ENCODE measurements at regions of chr19 and their contacts with region 1.

Region 1: DNA sequence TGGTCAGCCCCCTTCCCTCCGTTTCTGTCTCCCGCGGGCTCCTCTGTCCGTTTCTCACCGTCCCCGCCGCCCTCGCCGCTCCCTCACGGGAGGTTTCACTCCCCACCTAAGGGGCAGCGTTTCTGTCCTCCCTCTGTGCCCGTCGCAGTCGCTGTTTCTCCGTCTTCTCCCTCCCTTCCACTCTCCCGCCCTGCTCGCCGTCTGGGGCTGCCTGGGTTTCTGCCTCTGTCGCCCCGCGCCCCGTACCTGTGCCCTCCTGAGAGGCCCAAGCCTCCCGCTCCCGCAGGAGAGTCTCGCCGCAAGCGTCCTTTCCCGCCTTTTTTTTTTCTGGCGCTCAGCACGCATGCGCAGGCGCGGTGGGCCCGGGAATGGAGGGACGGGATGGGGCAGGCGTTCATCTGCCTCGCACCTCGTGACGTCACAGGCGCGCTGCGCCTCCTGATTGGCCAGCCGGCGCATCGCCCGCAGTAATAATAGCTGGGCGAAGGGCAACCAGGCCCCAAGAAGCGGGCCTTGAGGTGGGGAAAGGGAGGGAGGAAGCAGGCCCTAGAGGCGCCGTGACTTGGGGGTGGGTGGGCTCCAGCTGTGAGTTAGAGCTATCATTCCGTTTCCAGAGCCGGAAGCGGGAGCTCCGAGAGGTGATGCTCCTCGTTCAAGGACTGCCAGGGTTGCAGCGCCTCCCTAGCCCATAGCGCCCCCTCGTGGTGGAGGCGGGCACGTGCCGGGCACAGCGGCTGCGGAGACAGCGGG is 15.4 kb downstream of the SSC5D start:
- DNase-seq: no peak
- H3K4me3 ChIP-seq: peak overlapping the region; percentile 63
- CTCF ChIP-seq: peak; percentile 99

Region 2: DNA sequence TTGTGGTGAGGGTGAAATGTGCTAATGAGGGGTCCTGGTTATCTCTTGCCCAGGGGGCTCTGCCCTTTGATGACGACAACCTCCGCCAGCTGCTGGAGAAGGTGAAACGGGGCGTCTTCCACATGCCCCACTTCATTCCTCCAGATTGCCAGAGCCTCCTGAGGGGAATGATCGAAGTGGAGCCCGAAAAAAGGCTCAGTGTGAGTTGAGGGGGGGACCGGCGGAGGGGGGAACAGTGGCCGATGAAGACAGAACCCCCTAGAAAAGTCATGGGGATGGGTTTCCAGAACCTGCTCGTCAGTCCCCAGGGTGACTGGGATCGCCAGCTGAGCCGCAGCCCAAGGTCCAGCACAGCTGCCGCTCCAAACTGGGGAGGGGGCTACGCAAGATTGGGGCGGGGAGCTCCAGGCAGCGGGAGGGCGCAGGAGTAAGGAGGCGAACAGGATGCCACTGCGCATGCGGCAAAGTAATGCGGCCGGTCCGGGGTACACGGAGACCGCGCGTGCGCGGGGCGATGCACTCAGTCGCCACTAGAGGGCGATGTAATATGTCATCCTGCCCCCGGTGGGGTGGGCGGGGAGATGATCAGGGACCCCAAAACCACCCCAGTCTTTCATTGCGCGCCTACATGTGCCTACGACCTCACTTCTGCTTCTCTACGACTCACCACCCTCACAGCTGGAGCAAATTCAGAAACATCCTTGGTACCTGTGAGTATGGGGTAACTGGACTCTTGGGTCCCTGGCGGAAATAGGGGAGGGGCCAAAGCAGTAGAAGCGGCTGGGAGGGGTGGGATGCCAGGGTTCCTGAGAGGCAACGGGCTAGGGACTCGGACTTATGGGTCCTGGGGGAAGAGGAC is 202.0 kb before region 1 on chr19:
- CTCF ChIA-PET with region 1: interaction called, 13 read pairs
- POLR2A ChIA-PET with region 1: no interaction called
- DNase-seq: no peak
- H3K4me3 ChIP-seq: peak overlapping the region; percentile 23; the same call in 1 of the 2 replicates
- CTCF ChIP-seq: peak; percentile 77

Region 3: GRCh38 chr19:55418185-55418584 is 85.5 kb before region 1 on chr19:
- CTCF ChIA-PET with region 1: interaction called, 28 read pairs
- POLR2A ChIA-PET with region 1: no interaction called
- DNase-seq: peak; percentile 63
- H3K4me3 ChIP-seq: no peak overlapping the region
- CTCF ChIP-seq: peak; percentile 68

Region 4: GRCh38 chr19:55476100-55476775 is 27.4 kb before region 1 on chr19 and contains the start of gene ZNF628:
- CTCF ChIA-PET with region 1: interaction called, 38 read pairs
- POLR2A ChIA-PET with region 1: interaction called, 4 read pairs
- DNase-seq: peak; percentile 77
- H3K4me3 ChIP-seq: peak within 1 kb of the TSS; percentile 71
- CTCF ChIP-seq: no peak

Region 5: DNA sequence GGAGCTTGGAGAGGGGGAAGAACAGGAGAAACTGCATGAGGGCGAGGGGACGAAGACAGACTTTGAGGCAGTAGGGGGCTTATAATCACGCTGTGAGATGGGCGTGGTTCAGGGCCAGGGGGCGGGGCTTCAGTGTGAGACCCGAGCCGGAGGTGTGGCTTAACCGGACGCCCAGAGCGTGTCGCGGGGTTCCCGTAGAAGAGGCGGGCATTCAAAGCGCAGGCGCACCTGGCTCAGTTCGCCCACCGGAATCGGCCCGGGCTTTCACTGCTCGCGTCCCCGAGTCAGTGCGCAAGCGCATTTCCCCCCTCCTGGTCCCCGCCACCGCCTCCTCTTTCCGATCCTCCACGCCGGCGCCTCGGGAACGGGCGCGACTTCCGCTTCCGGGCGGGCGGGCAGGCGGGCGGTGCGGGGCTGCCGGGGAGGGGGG is 101.5 kb after region 1 on chr19:
- CTCF ChIA-PET with region 1: interaction called, 70 read pairs
- POLR2A ChIA-PET with region 1: no interaction called
- DNase-seq: peak; percentile 65
- H3K4me3 ChIP-seq: peak overlapping the region; percentile 96
- CTCF ChIP-seq: no peak

Region 6: GRCh38 chr19:55632463-55632834 is 128.8 kb after region 1 on chr19:
- CTCF ChIA-PET with region 1: interaction called, 35 read pairs
- POLR2A ChIA-PET with region 1: no interaction called
- DNase-seq: peak; percentile 84
- H3K4me3 ChIP-seq: no peak overlapping the region
- CTCF ChIP-seq: peak; percentile 76

Measured in AG04449 (cell line).